Naive thymus-derived CD4-positive, alpha-beta T cell (primary cell): ENCODE measurements at regions of chr21 and their contacts with region 1.

Region 1: GRCh38 chr21:37563641-37564340 is 197.2 kb downstream of the DYRK1A start:
- DNase-seq: peak; percentile 86 to 94 (median 91)
- ATAC-seq: peak; percentile 93
- H3K4me3 ChIP-seq: peak overlapping the region; percentile 99
- H3K4me3 Mint-ChIP-seq: peak overlapping the region; percentile 93 to 100 (median 97)
- H3K27ac ChIP-seq: peak overlapping the region; percentile 82
- H3K27ac Mint-ChIP-seq: peak overlapping the region; percentile 97 to 100 (median 99)
- H3K4me1 ChIP-seq: peaks cover 11 to 17% of the 10 kb centered on the region in 2 donors
- H3K4me1 Mint-ChIP-seq: peaks cover 0 to 32% (median 17%) of the 10 kb centered on the region in 7 donors
- H3K27me3 ChIP-seq: no peaks in the 10 kb centered on the region
- H3K27me3 Mint-ChIP-seq: peaks cover 0 to 8% (median 2%) of the 10 kb centered on the region in 5 donors

Region 2: GRCh38 chr21:37166733-37167132 is 397.1 kb before region 1 on chr21:
- CTCF ChIA-PET with region 1: no interaction called
- POLR2A ChIA-PET with region 1: no interaction called
- intact Hi-C with region 1: loop called in 1 of 2 experiments (anchors 10 kb)
- DNase-seq: peak in 3 of 9 donors; percentile 2 to 8 (median 5)
- ATAC-seq: no peak
- H3K4me3 ChIP-seq: no peak overlapping the region
- H3K4me3 Mint-ChIP-seq: no peak overlapping the region
- H3K27ac ChIP-seq: no peak overlapping the region
- H3K27ac Mint-ChIP-seq: peak overlapping the region in 2 of 9 donors; percentile 67 to 88
- H3K4me1 ChIP-seq: no peaks in the 10 kb centered on the region
- H3K4me1 Mint-ChIP-seq: peaks cover 0 to 12% (median 3%) of the 10 kb centered on the region in 7 donors
- H3K27me3 ChIP-seq: no peaks in the 10 kb centered on the region
- H3K27me3 Mint-ChIP-seq: no peaks in the 10 kb centered on the region

Region 3: GRCh38 chr21:37407719-37408420 is 155.9 kb before region 1 on chr21:
- CTCF ChIA-PET with region 1: no interaction called
- POLR2A ChIA-PET with region 1: no interaction called
- intact Hi-C with region 1: no loop called
- DNase-seq: no peak
- ATAC-seq: no peak
- H3K4me3 ChIP-seq: no peak overlapping the region
- H3K4me3 Mint-ChIP-seq: peak overlapping the region in 9 of 10 donors; percentile 10 to 71 (median 42)
- H3K27ac ChIP-seq: no peak overlapping the region
- H3K27ac Mint-ChIP-seq: peak overlapping the region in 7 of 9 donors; percentile 33 to 76 (median 39)
- H3K4me1 ChIP-seq: peaks cover 58 to 71% of the 10 kb centered on the region in 2 donors
- H3K4me1 Mint-ChIP-seq: peaks cover 65 to 97% (median 93%) of the 10 kb centered on the region in 7 donors
- H3K27me3 ChIP-seq: no peaks in the 10 kb centered on the region
- H3K27me3 Mint-ChIP-seq: no peaks in the 10 kb centered on the region

Region 4: DNA sequence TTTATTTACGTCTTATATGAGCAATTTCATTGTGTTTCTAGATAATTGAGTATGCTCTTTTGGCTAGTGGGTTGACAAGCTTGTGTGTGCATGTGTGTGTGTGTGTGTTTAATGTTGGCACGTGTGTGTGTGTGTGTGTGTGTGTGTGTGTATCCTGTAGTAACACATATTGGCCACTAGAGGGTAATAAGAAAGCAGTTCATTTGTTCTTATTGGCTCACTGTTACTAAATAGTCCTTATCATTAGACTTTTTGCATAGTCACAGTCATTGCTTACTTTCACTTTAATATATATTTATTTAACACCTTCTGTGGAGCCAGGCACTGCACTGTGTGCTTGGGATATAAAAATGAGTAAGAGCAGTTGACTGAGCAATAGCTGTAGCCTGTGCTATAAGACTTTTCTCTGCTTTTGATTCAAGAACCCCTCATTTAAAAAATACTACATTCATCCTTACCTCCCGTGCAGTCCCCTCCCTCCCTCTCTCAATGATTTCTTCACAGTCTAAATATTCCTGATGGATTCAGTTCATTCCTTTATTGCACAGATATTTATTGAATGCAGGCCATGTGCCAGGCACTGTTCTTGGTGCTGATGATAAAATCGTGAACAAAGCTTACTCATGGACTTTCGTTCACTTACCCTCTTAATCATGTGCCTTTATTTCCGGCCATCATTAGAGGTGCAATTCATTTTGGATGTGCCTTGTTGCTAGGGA is 100.5 kb before region 1 on chr21:
- CTCF ChIA-PET with region 1: interaction called, 3 read pairs
- POLR2A ChIA-PET with region 1: no interaction called
- intact Hi-C with region 1: loop called (anchors 5 kb)
- DNase-seq: peak in 6 of 9 donors; percentile 20 to 45 (median 31)
- ATAC-seq: peak; percentile 85
- H3K4me3 ChIP-seq: no peak overlapping the region
- H3K4me3 Mint-ChIP-seq: peak overlapping the region in 9 of 10 donors; percentile 3 to 80 (median 67)
- H3K27ac ChIP-seq: no peak overlapping the region
- H3K27ac Mint-ChIP-seq: peak overlapping the region; percentile 24 to 93 (median 81)
- H3K4me1 ChIP-seq: peaks cover 37 to 39% of the 10 kb centered on the region in 2 donors
- H3K4me1 Mint-ChIP-seq: peaks cover 56 to 98% (median 87%) of the 10 kb centered on the region in 7 donors
- H3K27me3 ChIP-seq: no peaks in the 10 kb centered on the region
- H3K27me3 Mint-ChIP-seq: no peaks in the 10 kb centered on the region

Region 5: DNA sequence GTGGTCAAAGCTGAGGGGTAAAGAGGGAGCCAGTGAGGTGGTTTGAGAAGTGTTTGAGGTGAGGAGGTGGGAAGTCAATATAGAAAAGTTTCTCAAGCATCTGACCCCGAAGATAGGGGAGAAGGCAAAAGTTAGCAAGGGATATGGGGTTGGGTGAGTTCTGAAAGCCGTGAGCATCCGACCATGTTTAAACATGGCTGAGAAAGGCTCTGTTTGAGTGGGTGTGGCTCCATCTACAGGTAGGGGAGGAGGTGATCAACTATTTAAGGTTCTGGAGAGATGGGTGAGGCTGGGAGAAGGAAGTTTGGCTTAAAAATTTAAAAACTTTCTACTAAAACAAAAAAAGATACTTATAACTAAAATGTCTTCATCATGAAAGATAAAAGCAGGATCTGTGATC is 78.7 kb after region 1 on chr21:
- CTCF ChIA-PET with region 1: interaction called, 6 read pairs
- POLR2A ChIA-PET with region 1: no interaction called
- intact Hi-C with region 1: loop called in 1 of 2 experiments (anchors 1 kb)
- DNase-seq: peak in 6 of 9 donors; percentile 7 to 43 (median 20)
- ATAC-seq: no peak
- H3K4me3 ChIP-seq: no peak overlapping the region
- H3K4me3 Mint-ChIP-seq: no peak overlapping the region
- H3K27ac ChIP-seq: no peak overlapping the region
- H3K27ac Mint-ChIP-seq: no peak overlapping the region
- H3K4me1 ChIP-seq: no peaks in the 10 kb centered on the region
- H3K4me1 Mint-ChIP-seq: peaks cover 0 to 6% (median 5%) of the 10 kb centered on the region in 7 donors
- H3K27me3 ChIP-seq: no peaks in the 10 kb centered on the region
- H3K27me3 Mint-ChIP-seq: peaks cover 20 to 63% (median 33%) of the 10 kb centered on the region in 5 donors

Region 6: GRCh38 chr21:37927711-37928110 is 363.9 kb after region 1 on chr21:
- CTCF ChIA-PET with region 1: no interaction called
- POLR2A ChIA-PET with region 1: no interaction called
- intact Hi-C with region 1: no loop called
- DNase-seq: no peak
- ATAC-seq: no peak
- H3K4me3 ChIP-seq: no peak overlapping the region
- H3K4me3 Mint-ChIP-seq: no peak overlapping the region
- H3K27ac ChIP-seq: no peak overlapping the region
- H3K27ac Mint-ChIP-seq: no peak overlapping the region
- H3K4me1 ChIP-seq: no peaks in the 10 kb centered on the region
- H3K4me1 Mint-ChIP-seq: no peaks in the 10 kb centered on the region
- H3K27me3 ChIP-seq: no peaks in the 10 kb centered on the region
- H3K27me3 Mint-ChIP-seq: peaks cover 4 to 35% (median 30%) of the 10 kb centered on the region in 5 donors

Region 7: GRCh38 chr21:38355992-38356797 is 792.4 kb after region 1 on chr21:
- CTCF ChIA-PET with region 1: no interaction called
- POLR2A ChIA-PET with region 1: no interaction called
- intact Hi-C with region 1: loop called in 1 of 2 experiments (anchors 1 kb)
- DNase-seq: peak; percentile 40 to 83 (median 72)
- ATAC-seq: peak; percentile 84
- H3K4me3 ChIP-seq: no peak overlapping the region
- H3K4me3 Mint-ChIP-seq: no peak overlapping the region
- H3K27ac ChIP-seq: no peak overlapping the region
- H3K27ac Mint-ChIP-seq: no peak overlapping the region
- H3K4me1 ChIP-seq: peaks cover 0 to 8% of the 10 kb centered on the region in 2 donors
- H3K4me1 Mint-ChIP-seq: peaks cover 5 to 15% (median 10%) of the 10 kb centered on the region in 7 donors
- H3K27me3 ChIP-seq: no peaks in the 10 kb centered on the region
- H3K27me3 Mint-ChIP-seq: peaks cover 4 to 25% (median 12%) of the 10 kb centered on the region in 5 donors